ENCODE measurements at regions of chr9 and their contacts with region 1.

Region 1: GRCh38 chr9:131178382-131178781 is 53.0 kb downstream of the NUP214 start:
- H3K4me3 ChIP-seq: no peak overlapping the region
- H3K27ac ChIP-seq: no peak overlapping the region
- H3K4me1 ChIP-seq: no peaks in the 10 kb centered on the region
- CTCF ChIP-seq: peak; percentile 72; the same call in 1 of the 2 replicates

Region 2: DNA sequence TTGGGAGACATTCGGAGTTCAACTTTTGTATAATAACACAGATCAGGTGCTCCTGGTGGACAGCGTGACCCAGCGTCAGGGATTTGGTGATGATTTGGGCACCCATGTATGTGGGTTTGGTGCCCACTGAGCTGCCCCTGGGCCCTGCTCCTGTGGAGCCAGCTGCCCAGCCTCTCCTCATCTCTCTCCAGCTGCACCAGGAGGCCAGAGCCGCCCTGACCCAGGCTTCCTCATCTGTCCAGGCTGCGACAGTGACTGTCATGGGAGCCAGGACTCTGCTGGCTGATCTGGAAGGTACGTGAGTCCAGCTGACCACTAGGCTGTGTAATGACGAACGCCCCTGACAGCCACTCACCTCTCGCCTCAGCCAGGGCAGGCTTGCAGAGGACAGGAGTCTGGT is 96.5 kb before region 1 on chr9:
- CTCF ChIA-PET with region 1: no interaction called
- POLR2A ChIA-PET with region 1: no interaction called
- H3K4me3 ChIP-seq: no peak overlapping the region
- H3K27ac ChIP-seq: no peak overlapping the region
- H3K4me1 ChIP-seq: no peaks in the 10 kb centered on the region
- CTCF ChIP-seq: no peak

Region 3: GRCh38 chr9:131167146-131167692 is 11.2 kb before region 1 on chr9:
- CTCF ChIA-PET with region 1: interaction called, 22 read pairs
- POLR2A ChIA-PET with region 1: interaction called, 3 read pairs
- H3K4me3 ChIP-seq: no peak overlapping the region
- H3K27ac ChIP-seq: no peak overlapping the region
- H3K4me1 ChIP-seq: no peaks in the 10 kb centered on the region
- CTCF ChIP-seq: no peak